WTC11 (cell line): ENCODE measurements at regions of chr9 and their contacts with region 1.

Region 1: GRCh38 chr9:70602321-70603019 is 188.0 kb upstream of the KLF9 start:
- DNase-seq: peak; percentile 52
- ATAC-seq: peak; percentile 88
- H3K4me3 Mint-ChIP-seq: no peak overlapping the region
- H3K27ac Mint-ChIP-seq: no peak overlapping the region
- H3K4me1 Mint-ChIP-seq: peaks cover 30% of the 10 kb centered on the region
- H3K27me3 Mint-ChIP-seq: no peaks in the 10 kb centered on the region
- CTCF ChIP-seq: peak; percentile 56

Region 2: GRCh38 chr9:70340572-70340971 is 261.9 kb before region 1 on chr9:
- CTCF ChIA-PET with region 1: interaction called, 32 read pairs
- POLR2A ChIA-PET with region 1: interaction called, 3 read pairs
- DNase-seq: no peak
- ATAC-seq: no peak
- H3K4me3 Mint-ChIP-seq: no peak overlapping the region
- H3K27ac Mint-ChIP-seq: no peak overlapping the region
- H3K4me1 Mint-ChIP-seq: 0 out of 2 replicates have a peak, but pooled peaks cover 3% of the 10 kb centered on the region
- H3K27me3 Mint-ChIP-seq: no peaks in the 10 kb centered on the region
- CTCF ChIP-seq: no peak

Region 3: DNA sequence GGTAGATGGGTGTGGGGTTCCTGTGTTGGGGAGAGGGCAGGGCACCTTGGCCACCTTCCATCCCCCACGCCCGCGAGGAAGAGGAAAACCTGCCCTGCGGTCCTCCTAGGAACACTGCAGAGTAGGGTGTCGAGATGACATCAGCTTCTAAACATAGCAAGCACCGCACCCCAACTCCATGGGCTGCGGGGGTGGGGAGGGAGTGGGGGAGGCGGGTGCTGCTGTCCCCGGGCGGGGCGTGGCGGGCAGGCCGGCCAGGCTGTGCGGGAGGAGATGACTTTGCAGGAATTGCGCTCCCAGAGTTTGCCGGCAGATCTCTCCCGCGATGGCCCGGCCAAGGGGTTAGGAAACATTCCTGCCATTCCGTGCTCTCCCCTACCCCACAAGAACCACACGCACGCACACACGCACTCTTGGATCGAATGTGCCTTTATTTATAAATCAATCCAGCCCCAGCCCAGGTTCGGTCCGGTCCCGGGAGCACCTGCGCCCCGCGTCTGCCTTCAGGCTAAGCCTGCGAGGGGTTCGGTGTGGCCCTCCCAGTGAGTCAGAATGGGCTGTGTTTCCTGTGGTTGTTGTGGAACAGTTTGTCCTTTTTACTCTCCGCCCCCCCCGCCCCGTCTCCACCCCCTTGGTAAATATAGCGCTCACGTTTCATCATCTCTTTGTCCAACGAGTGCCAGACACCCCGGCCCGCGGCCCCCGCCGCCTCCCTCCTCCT is 182.8 kb before region 1 on chr9:
- CTCF ChIA-PET with region 1: interaction called, 18 read pairs
- POLR2A ChIA-PET with region 1: interaction called, 5 read pairs
- DNase-seq: peak; percentile 74
- ATAC-seq: peak; percentile 8
- H3K4me3 Mint-ChIP-seq: peak overlapping the region; percentile 84
- H3K27ac Mint-ChIP-seq: peak overlapping the region; percentile 29; the same call in 1 of the 2 replicates
- H3K4me1 Mint-ChIP-seq: peaks cover 23% of the 10 kb centered on the region
- H3K27me3 Mint-ChIP-seq: peaks cover 44% of the 10 kb centered on the region
- CTCF ChIP-seq: no peak

Region 4: GRCh38 chr9:70510157-70510770 is 92.2 kb before region 1 on chr9:
- CTCF ChIA-PET with region 1: interaction called, 22 read pairs
- POLR2A ChIA-PET with region 1: no interaction called
- DNase-seq: peak; percentile 65
- ATAC-seq: peak; percentile 73
- H3K4me3 Mint-ChIP-seq: no peak overlapping the region
- H3K27ac Mint-ChIP-seq: no peak overlapping the region
- H3K4me1 Mint-ChIP-seq: peaks cover 7% of the 10 kb centered on the region
- H3K27me3 Mint-ChIP-seq: no peaks in the 10 kb centered on the region
- CTCF ChIP-seq: peak; percentile 61

Region 5: DNA sequence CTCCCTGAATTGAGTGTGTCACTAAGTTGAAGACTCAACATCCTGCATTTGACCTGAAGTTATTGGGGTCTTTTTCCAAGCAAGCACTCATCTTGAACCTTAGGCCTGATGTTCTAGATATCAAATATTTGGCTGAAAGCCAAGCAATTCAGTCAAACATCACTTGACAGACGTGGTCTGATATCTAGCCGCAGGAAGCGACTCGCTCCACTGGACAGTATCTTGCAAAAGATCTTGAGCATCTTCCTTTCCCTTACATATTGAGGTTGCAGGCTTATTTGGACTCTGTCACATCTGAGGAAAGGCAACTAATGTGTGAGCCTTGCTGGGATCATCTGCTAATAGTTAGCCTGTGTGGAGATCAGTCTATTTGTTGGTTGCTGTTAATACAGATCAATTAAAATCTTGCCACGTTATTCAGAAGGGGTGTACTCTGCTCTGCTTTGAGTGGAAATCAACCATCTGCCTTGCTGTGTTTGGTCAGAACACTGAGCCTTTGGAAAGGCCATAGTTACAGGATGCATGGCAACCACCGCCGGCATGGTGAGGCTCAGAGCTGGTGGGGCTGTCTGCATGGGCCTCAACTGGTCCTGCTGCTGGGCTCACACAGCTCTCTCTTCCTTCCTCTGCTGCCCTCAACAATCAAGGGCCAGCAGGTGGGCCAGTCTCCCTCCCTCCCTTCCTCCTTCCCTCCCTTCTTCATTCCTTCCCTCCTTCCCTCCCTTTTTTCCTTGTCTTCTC is 21.1 kb before region 1 on chr9:
- CTCF ChIA-PET with region 1: interaction called, 10 read pairs
- POLR2A ChIA-PET with region 1: no interaction called
- DNase-seq: no peak
- ATAC-seq: peak; percentile 67
- H3K4me3 Mint-ChIP-seq: no peak overlapping the region
- H3K27ac Mint-ChIP-seq: no peak overlapping the region
- H3K4me1 Mint-ChIP-seq: peaks cover 5% of the 10 kb centered on the region
- H3K27me3 Mint-ChIP-seq: no peaks in the 10 kb centered on the region
- CTCF ChIP-seq: no peak